HEK293 (cell line): ENCODE measurements at regions of chr6 and their contacts with region 1.

Region 1: GRCh38 chr6:88870717-88871330 is 92.6 kb downstream of the RNGTT start:
- H3K4me3 ChIP-seq: no peak overlapping the region
- H3K27ac ChIP-seq: no peak overlapping the region
- H3K4me1 ChIP-seq: peaks cover 20% of the 10 kb centered on the region
- CTCF ChIP-seq: no peak

Region 2: GRCh38 chr6:88780714-88781389 is 90.0 kb before region 1 on chr6:
- CTCF ChIA-PET with region 1: interaction called, 10 read pairs
- POLR2A ChIA-PET with region 1: no interaction called
- H3K4me3 ChIP-seq: no peak overlapping the region
- H3K27ac ChIP-seq: no peak overlapping the region
- H3K4me1 ChIP-seq: no peaks in the 10 kb centered on the region
- CTCF ChIP-seq: peak; percentile 64

Region 3: DNA sequence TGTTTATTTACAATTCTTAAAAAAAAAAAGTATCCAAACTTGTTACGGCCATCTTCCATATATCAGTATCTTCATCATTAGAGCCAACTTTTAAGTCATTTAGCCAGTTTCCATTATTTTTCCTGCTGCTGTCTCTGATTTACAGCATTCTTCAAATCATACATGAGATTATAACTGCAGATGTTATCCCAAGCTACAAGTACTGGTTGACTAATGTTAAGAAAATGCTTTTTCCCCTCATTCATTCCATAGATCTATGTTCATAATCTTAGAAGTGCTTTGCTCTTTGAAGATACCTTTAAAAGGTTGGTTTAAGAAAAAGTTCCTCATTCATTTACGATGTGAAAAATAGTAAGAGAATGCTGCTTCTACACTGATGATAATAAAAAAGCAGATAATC is 66.1 kb before region 1 on chr6:
- CTCF ChIA-PET with region 1: no interaction called
- POLR2A ChIA-PET with region 1: no interaction called
- H3K4me3 ChIP-seq: no peak overlapping the region
- H3K27ac ChIP-seq: no peak overlapping the region
- H3K4me1 ChIP-seq: no peaks in the 10 kb centered on the region
- CTCF ChIP-seq: no peak

Region 4: DNA sequence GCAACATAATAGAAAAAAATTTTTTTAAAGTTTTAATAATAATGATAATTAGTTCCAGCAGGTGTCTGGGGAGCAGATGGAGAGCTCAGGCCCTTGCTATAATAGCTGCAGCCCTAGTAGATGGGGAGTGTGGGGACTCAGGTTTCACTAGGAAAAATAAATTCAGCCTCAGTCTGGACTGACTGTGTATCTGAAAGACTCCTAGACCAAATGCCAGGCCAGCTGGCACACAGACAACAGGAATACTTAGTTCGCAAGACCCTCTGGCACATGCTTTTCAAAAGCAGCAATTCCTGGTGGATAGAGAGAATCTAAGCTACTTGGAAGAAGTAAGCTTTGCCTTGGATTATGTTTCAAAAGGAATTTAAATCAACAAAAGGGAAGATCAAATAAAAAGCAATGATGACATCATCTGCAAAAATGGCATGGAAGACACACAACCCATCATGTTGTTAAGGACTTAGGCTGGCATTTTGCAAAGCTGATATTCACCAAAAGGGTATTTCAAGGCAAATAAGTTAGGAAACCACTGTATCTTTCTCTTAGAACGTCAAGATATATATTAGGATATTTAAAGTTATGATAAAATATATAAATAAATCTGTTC is 15.2 kb before region 1 on chr6:
- CTCF ChIA-PET with region 1: interaction called, 32 read pairs
- POLR2A ChIA-PET with region 1: no interaction called
- H3K4me3 ChIP-seq: no peak overlapping the region
- H3K27ac ChIP-seq: no peak overlapping the region
- H3K4me1 ChIP-seq: peaks cover 8% of the 10 kb centered on the region; the same call in 1 of the 2 replicates
- CTCF ChIP-seq: no peak

Region 5: GRCh38 chr6:88899569-88900316 is 28.9 kb after region 1 on chr6:
- CTCF ChIA-PET with region 1: interaction called, 13 read pairs
- POLR2A ChIA-PET with region 1: no interaction called
- H3K4me3 ChIP-seq: no peak overlapping the region
- H3K27ac ChIP-seq: no peak overlapping the region
- H3K4me1 ChIP-seq: no peaks in the 10 kb centered on the region
- CTCF ChIP-seq: no peak

Region 6: DNA sequence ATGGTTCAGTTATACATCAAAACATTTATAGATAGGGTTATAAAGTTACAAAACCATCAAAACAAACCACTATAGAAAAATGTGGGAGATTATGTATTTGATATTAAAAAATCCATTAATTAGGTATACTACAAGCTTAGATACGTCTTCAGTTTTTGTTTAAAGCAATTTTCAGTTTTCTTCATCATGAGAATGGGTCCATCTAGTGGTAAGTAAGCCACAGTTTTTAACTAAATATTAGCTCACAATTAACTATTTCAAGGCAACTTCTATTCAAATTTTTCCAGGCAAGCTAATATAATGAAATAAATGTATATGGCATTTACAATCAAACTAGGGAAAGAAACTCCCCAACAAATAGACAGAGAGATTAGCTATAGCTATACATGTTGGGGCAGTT is 48.2 kb after region 1 on chr6:
- CTCF ChIA-PET with region 1: interaction called, 11 read pairs
- POLR2A ChIA-PET with region 1: interaction called, 3 read pairs
- H3K4me3 ChIP-seq: no peak overlapping the region
- H3K27ac ChIP-seq: no peak overlapping the region
- H3K4me1 ChIP-seq: peaks cover 8% of the 10 kb centered on the region; the same call in 1 of the 2 replicates
- CTCF ChIP-seq: 0 out of 2 replicates have a peak, but pooled peaks have one; percentile 21

Region 7: DNA sequence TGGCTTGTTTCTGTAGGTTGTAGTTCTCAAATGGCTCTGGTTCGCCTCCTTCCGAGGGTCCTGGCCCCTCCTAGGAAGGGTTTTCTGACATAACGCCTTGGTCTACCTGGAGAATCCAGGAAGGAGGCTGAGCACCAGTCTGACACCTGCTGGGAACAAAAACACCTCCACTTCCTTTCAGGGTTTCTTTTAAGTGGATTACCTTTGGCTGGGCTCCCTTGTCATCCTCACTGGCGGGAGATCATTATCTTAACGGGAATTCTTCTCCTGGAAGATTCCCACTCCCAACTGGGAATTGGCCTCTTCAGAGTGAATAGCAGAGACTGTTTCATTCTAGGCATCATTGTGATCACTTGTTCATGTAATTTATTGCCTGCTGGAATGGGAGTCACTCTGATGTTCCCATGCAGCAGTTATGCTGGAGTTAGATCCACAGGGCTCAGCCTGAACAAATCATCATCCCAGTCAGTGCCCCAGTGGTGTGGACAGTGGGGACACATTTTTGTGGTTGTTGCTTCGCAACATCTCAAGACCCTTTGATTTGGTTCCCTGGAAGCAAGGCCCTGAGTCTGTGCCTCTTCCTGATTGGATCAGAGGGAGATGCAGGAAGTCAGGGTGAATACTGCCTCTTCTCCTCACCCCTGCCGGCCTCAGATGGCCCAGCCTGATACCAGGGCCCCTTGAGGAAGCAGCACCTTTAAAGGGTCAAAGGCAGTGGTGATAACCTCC is 718.6 kb after region 1 on chr6:
- CTCF ChIA-PET with region 1: no interaction called
- POLR2A ChIA-PET with region 1: no interaction called
- H3K4me3 ChIP-seq: no peak overlapping the region
- H3K27ac ChIP-seq: no peak overlapping the region
- H3K4me1 ChIP-seq: no peaks in the 10 kb centered on the region
- CTCF ChIP-seq: no peak